Aorta (tissue), 5 donors: ENCODE measurements at regions of chr12 and their contacts with region 1.

Region 1: GRCh38 chr12:87815771-87816585 is 213.2 kb downstream of the C12orf50 start:
- DNase-seq: no peak
- ATAC-seq: no peak
- H3K4me3 ChIP-seq: no peak overlapping the region
- H3K27ac ChIP-seq: no peak overlapping the region
- H3K4me1 ChIP-seq: peaks cover 0 to 5% of the 10 kb centered on the region in 2 donors
- H3K27me3 ChIP-seq: no peaks in the 10 kb centered on the region

Region 2: DNA sequence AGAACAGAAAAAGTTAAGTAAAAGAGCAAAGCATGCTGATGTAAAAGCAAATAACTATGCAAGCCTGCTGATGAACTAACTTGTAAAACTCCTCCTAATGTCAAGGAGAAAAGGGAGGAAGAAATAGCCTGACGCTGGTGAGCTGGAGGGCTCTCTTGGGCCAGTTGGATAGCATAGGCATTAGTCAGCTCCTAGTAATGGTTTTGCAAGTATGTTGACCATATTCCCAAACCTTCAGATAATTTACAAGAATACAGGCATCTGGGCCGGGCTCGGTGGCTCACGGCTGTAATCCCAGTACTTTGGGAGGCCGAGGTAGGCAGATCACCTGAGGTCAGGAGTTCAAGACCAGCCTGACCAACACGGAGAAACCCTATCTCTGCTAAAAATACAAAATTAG is 658.2 kb before region 1 on chr12:
- intact Hi-C with region 1: no loop called
- DNase-seq: peak; percentile 53 to 63
- ATAC-seq: peak; percentile 72
- H3K4me3 ChIP-seq: no peak overlapping the region
- H3K27ac ChIP-seq: no peak overlapping the region
- H3K4me1 ChIP-seq: peaks cover 0 to 2% of the 10 kb centered on the region in 2 donors
- H3K27me3 ChIP-seq: no peaks in the 10 kb centered on the region

Region 3: DNA sequence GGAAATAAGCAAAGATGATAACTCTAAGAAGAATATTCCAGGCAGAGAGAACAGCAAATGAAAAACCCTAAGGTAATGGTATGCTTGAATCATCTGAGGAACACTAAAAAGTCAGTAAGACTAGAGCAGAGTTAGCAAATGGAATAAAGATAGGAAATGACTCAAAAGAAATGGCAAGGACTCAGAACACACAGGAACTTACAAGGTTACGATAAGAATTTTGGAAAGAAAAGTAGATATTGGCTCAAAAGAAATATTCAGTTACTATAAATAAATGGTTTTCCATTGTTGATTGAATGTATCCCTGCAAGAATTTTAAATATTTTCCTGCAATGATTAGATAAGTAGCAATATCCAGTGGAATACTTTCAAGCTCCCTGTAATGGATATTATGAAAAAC is 492.6 kb before region 1 on chr12:
- intact Hi-C with region 1: loop called in 1 of 2 experiments (anchors 10 kb)
- DNase-seq: no peak
- ATAC-seq: peak; percentile 74
- H3K4me3 ChIP-seq: no peak overlapping the region
- H3K27ac ChIP-seq: no peak overlapping the region
- H3K4me1 ChIP-seq: peaks cover 2 to 8% of the 10 kb centered on the region in 2 donors
- H3K27me3 ChIP-seq: no peaks in the 10 kb centered on the region